Dorsolateral prefrontal cortex (tissue), 120 donors: ENCODE measurements at regions of chr2 and their contacts with region 1.

Region 1: GRCh38 chr2:98835831-98836385 is 100.1 kb downstream of the CRACDL start:
- DNase-seq: no peak
- H3K4me3 ChIP-seq: no peak overlapping the region
- H3K27ac ChIP-seq: peak overlapping the region in 1 of 59 donors; percentile 7
- H3K27me3 ChIP-seq: no peaks in the 10 kb centered on the region
- CTCF ChIP-seq: no peak

Region 2: DNA sequence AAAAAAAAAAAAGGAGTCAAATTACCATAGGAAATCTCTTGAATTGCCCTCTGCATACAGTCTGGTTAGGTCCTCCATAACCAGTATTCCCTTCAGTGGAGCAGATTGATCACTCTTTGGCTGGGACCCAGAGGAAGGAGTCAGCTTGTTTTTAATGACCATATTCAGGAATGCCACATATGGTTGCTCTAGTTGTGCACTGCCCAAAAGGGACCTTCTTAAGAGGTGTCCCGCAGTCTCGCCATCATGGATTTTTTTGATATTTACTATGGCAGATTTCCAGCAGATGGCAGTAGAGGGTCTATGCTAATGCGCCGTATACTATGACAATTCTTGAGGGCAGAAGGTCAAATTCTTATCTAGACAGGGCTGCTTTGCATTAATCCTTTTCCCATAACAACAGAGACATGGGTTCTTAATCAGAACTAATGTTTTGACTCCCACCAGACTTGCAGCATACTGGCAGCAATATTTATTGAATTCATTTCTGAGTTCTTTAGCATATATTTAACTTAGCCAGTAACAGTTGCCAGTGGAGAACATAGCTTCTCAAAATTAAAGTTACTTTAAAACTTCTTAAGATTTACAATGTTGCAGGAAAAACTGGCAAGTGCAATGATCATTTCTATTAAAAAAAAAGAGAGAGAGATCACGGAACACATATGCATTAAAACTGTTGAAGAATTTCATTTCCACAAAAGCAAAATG is 423.0 kb before region 1 on chr2:
- intact Hi-C with region 1: loop called in 1 of 2 experiments (anchors 5 kb)
- DNase-seq: peak in 1 of 10 donors; percentile 33
- H3K4me3 ChIP-seq: no peak overlapping the region
- H3K27ac ChIP-seq: no peak overlapping the region
- H3K27me3 ChIP-seq: no peaks in the 10 kb centered on the region
- CTCF ChIP-seq: peak; percentile 64 to 85 (median 76)

Region 3: GRCh38 chr2:98731041-98731893 is 104.6 kb before region 1 on chr2 and contains the start of gene MGAT4A:
- intact Hi-C with region 1: loop called in 1 of 2 experiments (anchors 10 kb)
- DNase-seq: peak; percentile 66 to 90 (median 74)
- H3K4me3 ChIP-seq: peak within 1 kb of the TSS; percentile 67 to 99 (median 86)
- H3K27ac ChIP-seq: peak within 1 kb of the TSS; percentile 67 to 98 (median 91)
- H3K27me3 ChIP-seq: no peaks in the 10 kb centered on the region
- CTCF ChIP-seq: peak in 5 of 56 donors; percentile 4 to 26 (median 13)
- total RNA-seq, gene MGAT4A: 42.8 to 86.5 (median 65.9) TPM

Region 4: DNA sequence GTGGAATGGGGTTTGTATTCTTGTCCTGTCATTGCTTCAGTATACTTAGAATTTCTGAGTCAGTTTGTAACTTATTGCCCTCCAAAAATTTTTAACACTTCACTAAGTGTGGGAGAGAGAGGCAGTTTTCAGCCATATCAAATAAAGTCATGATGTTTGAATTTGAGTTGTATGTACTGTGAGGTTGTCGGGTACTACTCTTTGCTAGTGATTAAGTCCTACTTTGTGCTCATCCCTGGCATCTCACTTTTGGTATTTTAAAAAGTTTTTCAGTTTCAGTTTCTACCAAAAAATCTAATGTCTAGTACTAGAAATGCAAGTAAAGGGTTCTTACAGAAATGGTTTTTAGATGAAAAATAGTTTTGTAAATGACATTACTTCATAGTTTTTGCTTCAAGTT is 542.0 kb after region 1 on chr2:
- intact Hi-C with region 1: no loop called
- DNase-seq: no peak
- H3K4me3 ChIP-seq: no peak overlapping the region
- H3K27ac ChIP-seq: no peak overlapping the region
- H3K27me3 ChIP-seq: no peaks in the 10 kb centered on the region
- CTCF ChIP-seq: no peak